ENCODE measurements at regions of chr16 and their contacts with region 1.

Region 1: GRCh38 chr16:72400257-72400882 is 228.4 kb upstream of the PMFBP1 start:
- DNase-seq: peak; percentile 48
- CTCF ChIP-seq: peak; percentile 55

Region 2: DNA sequence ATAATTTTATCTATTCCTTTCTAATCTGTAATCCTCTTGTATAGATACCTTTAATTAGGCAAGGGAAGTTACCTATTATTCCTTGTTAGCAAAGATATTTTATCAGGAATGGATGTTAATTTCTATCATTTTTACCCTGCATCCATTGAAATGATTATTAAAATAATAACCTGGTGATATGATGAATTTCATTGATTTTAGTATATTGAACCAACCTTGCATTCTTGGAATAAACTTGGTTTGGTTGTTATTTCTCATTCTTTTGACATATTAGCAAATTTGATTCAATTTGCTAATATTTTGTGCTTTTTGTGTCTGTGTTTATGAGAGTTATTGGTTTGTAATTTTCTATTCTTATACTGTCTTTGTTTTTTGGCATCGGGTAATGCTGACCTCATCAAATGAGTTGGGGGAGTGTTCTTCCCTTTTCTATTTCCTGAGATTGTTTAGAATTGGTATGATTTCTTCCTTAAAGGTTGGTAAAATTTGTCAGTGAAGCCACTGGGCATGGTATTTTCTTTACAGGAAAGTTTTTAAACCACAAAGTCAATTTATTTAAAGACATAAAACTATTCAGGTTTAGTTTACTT is 22.0 kb after region 1 on chr16:
- CTCF ChIA-PET with region 1: interaction called, 14 read pairs
- POLR2A ChIA-PET with region 1: no interaction called
- DNase-seq: no peak
- CTCF ChIP-seq: no peak

Measured in GM10248 (cell line).